AG04450 (cell line): ENCODE measurements at regions of chr5 and their contacts with region 1.

Region 1: DNA sequence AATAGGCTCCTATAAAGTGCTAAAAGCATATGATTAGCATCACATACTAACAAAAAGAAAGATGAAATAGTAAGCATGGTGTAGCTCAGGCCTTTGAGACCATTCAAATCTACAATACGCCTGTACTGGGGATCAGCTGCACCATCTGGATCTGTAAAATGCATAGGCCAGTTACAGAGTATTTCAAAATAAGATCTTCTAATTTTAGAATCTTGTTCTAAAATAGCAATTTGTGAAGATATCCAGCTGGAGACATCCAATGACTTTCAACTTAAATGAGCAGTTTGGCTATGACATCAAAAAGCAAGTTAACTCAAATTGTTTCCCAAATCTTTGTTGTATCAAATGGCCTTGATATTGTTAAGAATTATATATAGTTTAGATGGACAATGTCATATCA is 386.3 kb downstream of the MRPS30 start:
- DNase-seq: no peak
- H3K4me3 ChIP-seq: no peak overlapping the region
- H3K27ac ChIP-seq: no peak overlapping the region
- H3K27me3 ChIP-seq: no peaks in the 10 kb centered on the region
- CTCF ChIP-seq: no peak

Region 2: GRCh38 chr5:45521067-45521466 is 326.0 kb after region 1 on chr5:
- CTCF ChIA-PET with region 1: interaction called, 11 read pairs
- POLR2A ChIA-PET with region 1: no interaction called
- DNase-seq: no peak
- H3K4me3 ChIP-seq: no peak overlapping the region
- H3K27ac ChIP-seq: no peak overlapping the region
- H3K27me3 ChIP-seq: no peaks in the 10 kb centered on the region
- CTCF ChIP-seq: peak; percentile 14; the same call in 1 of the 2 replicates